Calu3 (cell line): ENCODE measurements at regions of chr3 and their contacts with region 1.

Region 1: DNA sequence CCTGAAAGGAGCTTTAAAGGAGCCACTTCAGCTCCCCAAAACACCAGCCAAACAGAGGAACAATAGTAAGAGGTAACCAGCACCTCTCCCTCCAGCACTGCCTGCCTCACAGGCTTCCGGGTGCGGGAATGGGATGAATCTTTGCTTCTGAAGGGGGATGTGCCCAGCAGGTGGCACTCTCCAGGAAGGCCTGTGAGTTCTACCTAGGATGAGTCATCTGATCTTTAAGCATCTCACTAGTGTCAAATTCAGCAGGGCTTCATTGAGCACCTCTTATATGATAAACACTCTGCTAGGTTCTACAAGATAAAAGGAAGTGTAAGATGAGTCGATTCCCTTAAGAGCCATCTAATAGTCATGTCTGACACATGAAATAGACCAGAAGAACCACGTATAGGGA is 237.4 kb upstream of the UMPS start:
- DNase-seq: peak; percentile 84
- H3K4me3 Mint-ChIP-seq: no peak overlapping the region
- H3K27ac Mint-ChIP-seq: no peak overlapping the region
- H3K4me1 Mint-ChIP-seq: no peaks in the 10 kb centered on the region
- H3K27me3 Mint-ChIP-seq: peaks cover 84% of the 10 kb centered on the region
- CTCF ChIP-seq: peak; percentile 38

Region 2: DNA sequence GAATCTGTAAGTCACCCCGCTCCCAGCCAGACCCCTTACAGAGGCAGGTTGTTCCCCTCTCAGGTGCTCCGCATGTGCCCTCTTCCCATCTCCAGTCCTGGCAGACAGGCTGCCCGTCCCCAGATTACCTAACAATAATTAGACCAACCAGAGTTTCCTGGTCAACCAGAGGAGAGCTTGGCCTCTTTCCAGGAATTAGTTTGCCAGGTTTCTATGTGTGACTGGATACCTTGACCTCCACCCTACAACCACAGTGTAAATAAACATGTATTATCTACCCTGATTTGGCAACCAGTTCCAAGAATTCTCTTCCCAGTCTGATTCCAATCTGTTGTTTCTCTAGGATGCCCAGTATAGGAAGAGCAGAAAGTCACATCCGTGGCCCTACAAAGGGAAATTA is 59.4 kb after region 1 on chr3:
- CTCF ChIA-PET with region 1: interaction called, 7 read pairs
- intact Hi-C with region 1: loop called (anchors 1 kb)
- DNase-seq: peak; percentile 78
- H3K4me3 Mint-ChIP-seq: no peak overlapping the region
- H3K27ac Mint-ChIP-seq: no peak overlapping the region
- H3K4me1 Mint-ChIP-seq: peaks cover 4% of the 10 kb centered on the region
- H3K27me3 Mint-ChIP-seq: peaks cover 91% of the 10 kb centered on the region
- CTCF ChIP-seq: no peak

Region 3: GRCh38 chr3:124559881-124560574 is 67.2 kb after region 1 on chr3:
- CTCF ChIA-PET with region 1: no interaction called
- intact Hi-C with region 1: loop called (anchors 1 kb)
- DNase-seq: peak; percentile 74
- H3K4me3 Mint-ChIP-seq: no peak overlapping the region
- H3K27ac Mint-ChIP-seq: no peak overlapping the region
- H3K4me1 Mint-ChIP-seq: peaks cover 24% of the 10 kb centered on the region
- H3K27me3 Mint-ChIP-seq: peaks cover 71% of the 10 kb centered on the region
- CTCF ChIP-seq: peak; percentile 69